Head of caudate nucleus (tissue), 42 donors: ENCODE measurements at regions of chr2 and their contacts with region 1.

Region 1: DNA sequence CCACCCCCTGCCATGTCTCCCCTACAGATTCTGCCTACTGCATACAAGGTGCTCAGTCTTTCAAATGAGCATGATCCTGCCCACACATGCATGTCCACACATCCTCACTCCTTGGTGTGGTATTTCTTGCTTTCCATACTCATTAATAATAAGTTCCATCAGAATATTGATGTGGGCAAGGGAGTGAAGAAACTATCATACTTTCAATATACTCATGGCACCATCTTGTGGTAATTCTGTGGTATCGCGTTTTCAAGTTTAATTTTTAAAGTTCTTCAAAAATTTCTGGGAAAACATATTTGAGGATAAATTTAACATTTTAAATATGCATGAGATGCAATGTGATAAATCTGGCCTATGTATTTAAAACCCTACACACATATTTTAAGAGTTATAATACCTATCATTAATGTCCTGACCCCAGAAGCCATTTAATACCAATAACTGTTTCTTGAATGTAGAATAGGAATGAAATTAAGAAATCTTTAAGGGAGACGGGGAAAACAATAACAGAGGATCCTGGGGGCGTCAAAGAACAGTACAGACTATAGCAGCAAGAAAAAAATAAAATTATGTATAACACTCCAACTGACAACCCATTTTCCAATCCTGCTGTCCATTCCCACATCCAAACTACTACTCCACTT is 110.1 kb downstream of the ZNF385B start:
- DNase-seq: no peak

Region 2: DNA sequence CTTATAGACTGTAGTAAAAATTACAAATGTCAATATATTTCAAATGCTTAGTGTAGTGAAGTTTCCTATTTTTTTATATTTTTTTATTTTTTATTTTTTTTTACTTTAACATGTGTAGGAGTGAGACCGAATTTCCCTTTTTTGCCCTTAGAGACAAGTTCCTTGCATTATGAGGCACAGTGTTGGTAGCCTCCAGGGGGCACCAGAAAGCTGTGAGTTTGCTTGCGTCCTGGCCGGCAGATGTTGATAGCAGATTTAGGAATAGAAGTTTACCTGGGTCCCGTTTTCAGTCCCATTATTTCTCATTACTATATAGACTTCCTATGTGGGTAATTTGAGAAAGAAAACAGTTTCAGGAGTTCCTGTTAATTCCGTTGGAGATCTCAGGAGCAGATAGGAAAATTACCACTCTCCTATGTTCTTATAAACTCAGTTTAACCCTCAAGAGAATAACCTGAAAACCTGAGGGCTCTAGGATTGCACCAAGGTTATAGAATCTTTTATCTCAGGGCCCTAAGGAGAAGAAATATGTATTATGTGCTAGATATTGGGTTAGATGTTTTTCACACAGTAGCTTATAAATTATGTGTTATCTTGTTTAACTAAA is 329.1 kb before region 1 on chr2:
- intact Hi-C with region 1: loop called (anchors 5 kb)
- DNase-seq: peak; percentile 54 to 88 (median 74)

Region 3: GRCh38 chr2:179661986-179662385 is 89.3 kb before region 1 on chr2:
- intact Hi-C with region 1: no loop called
- DNase-seq: no peak

Region 4: GRCh38 chr2:179932786-179933185 is 181.5 kb after region 1 on chr2:
- intact Hi-C with region 1: no loop called
- DNase-seq: peak in 9 of 42 donors; percentile 13 to 62 (median 22)